PC-9 (cell line): ENCODE measurements at regions of chr15 and their contacts with region 1.

Region 1: GRCh38 chr15:64651573-64652260 is 123.7 kb downstream of the RBPMS2 start:
- DNase-seq: peak; percentile 11 to 63
- H3K4me3 ChIP-seq: no peak overlapping the region
- H3K27ac ChIP-seq: peak overlapping the region; percentile 29; the same call in 1 of the 2 replicates
- H3K4me1 ChIP-seq: peaks cover 10% of the 10 kb centered on the region
- H3K27me3 ChIP-seq: no peaks in the 10 kb centered on the region
- CTCF ChIP-seq: no peak

Region 2: DNA sequence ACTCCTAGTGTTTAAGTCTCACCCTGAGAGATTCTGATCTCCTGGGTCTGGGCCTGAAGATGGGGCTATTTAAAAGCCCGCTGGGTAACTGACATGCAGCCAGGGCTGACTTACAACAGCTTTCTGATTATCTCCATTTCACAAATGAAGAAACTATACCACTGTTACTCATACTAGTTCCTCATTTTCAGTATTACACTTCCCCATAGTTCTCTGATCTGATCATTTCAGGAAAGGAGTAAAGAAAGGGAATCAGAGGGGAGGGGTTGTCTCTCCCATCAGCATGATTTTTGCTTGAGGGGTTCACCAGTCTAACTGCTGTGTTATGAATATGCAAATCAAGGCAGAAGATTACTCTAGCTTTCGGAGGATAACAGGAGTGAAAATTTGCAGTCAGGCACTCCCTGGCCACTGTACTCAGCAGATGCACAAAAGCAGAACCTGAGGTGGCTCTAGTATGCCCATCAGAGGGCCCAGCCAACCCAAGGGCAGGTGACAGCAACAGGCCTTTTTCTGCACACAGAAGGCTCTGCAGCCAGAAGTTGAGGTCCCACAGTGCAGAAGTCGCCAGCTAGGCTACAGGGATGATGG is 664.9 kb before region 1 on chr15:
- CTCF ChIA-PET with region 1: no interaction called
- POLR2A ChIA-PET with region 1: no interaction called
- intact Hi-C with region 1: no loop called
- DNase-seq: peak in 1 of 2 experiments; percentile 54
- H3K4me3 ChIP-seq: no peak overlapping the region
- H3K27ac ChIP-seq: no peak overlapping the region
- H3K4me1 ChIP-seq: no peaks in the 10 kb centered on the region
- H3K27me3 ChIP-seq: no peaks in the 10 kb centered on the region
- CTCF ChIP-seq: no peak

Region 3: GRCh38 chr15:64430000-64430735 is 221.5 kb before region 1 on chr15:
- CTCF ChIA-PET with region 1: no interaction called
- POLR2A ChIA-PET with region 1: no interaction called
- intact Hi-C with region 1: loop called (anchors 10 kb)
- DNase-seq: no peak
- H3K4me3 ChIP-seq: no peak overlapping the region
- H3K27ac ChIP-seq: no peak overlapping the region
- H3K4me1 ChIP-seq: no peaks in the 10 kb centered on the region
- H3K27me3 ChIP-seq: no peaks in the 10 kb centered on the region
- CTCF ChIP-seq: no peak

Region 4: GRCh38 chr15:64596701-64597476 is 54.8 kb before region 1 on chr15:
- CTCF ChIA-PET with region 1: interaction called, 17 read pairs
- POLR2A ChIA-PET with region 1: interaction called, 5 read pairs
- intact Hi-C with region 1: no loop called
- DNase-seq: no peak
- H3K4me3 ChIP-seq: no peak overlapping the region
- H3K27ac ChIP-seq: no peak overlapping the region
- H3K4me1 ChIP-seq: no peaks in the 10 kb centered on the region
- H3K27me3 ChIP-seq: no peaks in the 10 kb centered on the region
- CTCF ChIP-seq: no peak